Gastrocnemius medialis (tissue), 4 donors: ENCODE measurements at regions of chr10 and their contacts with region 1.

Region 1: GRCh38 chr10:58384999-58385783 is at the start of gene TFAM:
- DNase-seq: peak; percentile 86 to 93
- ATAC-seq: peak; percentile 85 to 89
- H3K4me3 ChIP-seq: peak within 1 kb of the TSS; percentile 72 to 87 (median 76)
- H3K27ac ChIP-seq: peak within 1 kb of the TSS; percentile 82 to 94 (median 87)
- H3K4me1 ChIP-seq: peaks cover 3 to 15% of the 10 kb centered on the region in 2 donors
- H3K27me3 ChIP-seq: no peaks in the 10 kb centered on the region
- CTCF ChIP-seq: peak; percentile 26 to 63 (median 49)
- POLR2A ChIP-seq: peak; percentile 90 to 95
- total RNA-seq, gene TFAM: 9.2 to 21.7 (median 15.0) TPM

Region 2: GRCh38 chr10:58177362-58177947 is 207.7 kb before region 1 on chr10:
- in situ Hi-C with region 1: loop called in 2 of 4 experiments (anchors 25 kb)
- intact Hi-C with region 1: loop called (anchors 5 kb)
- DNase-seq: no peak
- ATAC-seq: peak in 1 of 2 donors; percentile 50
- H3K4me3 ChIP-seq: no peak overlapping the region
- H3K27ac ChIP-seq: no peak overlapping the region
- H3K4me1 ChIP-seq: no peaks in the 10 kb centered on the region
- H3K27me3 ChIP-seq: no peaks in the 10 kb centered on the region
- CTCF ChIP-seq: peak; percentile 50 to 69 (median 64)
- POLR2A ChIP-seq: no peak

Region 3: GRCh38 chr10:58268870-58269605 is 116.2 kb before region 1 on chr10 and contains the start of gene CISD1:
- in situ Hi-C with region 1: no loop called
- intact Hi-C with region 1: loop called (anchors 1 kb)
- DNase-seq: peak; percentile 98 to 99
- ATAC-seq: peak; percentile 81 to 83
- H3K4me3 ChIP-seq: peak within 1 kb of the TSS; percentile 62 to 89 (median 84)
- H3K27ac ChIP-seq: peak within 1 kb of the TSS; percentile 88 to 97 (median 96)
- H3K4me1 ChIP-seq: peaks cover 24 to 36% of the 10 kb centered on the region in 2 donors
- H3K27me3 ChIP-seq: no peaks in the 10 kb centered on the region
- CTCF ChIP-seq: peak in 1 of 5 experiments; percentile 4
- POLR2A ChIP-seq: peak; percentile 90 to 91
- total RNA-seq, gene CISD1: 54.4 to 90.2 (median 71.1) TPM

Region 4: GRCh38 chr10:58299580-58299979 is 85.6 kb before region 1 on chr10:
- in situ Hi-C with region 1: no loop called
- intact Hi-C with region 1: loop called (anchors 1 kb)
- DNase-seq: peak; percentile 4 to 34
- ATAC-seq: peak; percentile 73 to 77
- H3K4me3 ChIP-seq: no peak overlapping the region
- H3K27ac ChIP-seq: no peak overlapping the region
- H3K4me1 ChIP-seq: peaks cover 3 to 8% of the 10 kb centered on the region in 2 donors
- H3K27me3 ChIP-seq: no peaks in the 10 kb centered on the region
- CTCF ChIP-seq: peak; percentile 60 to 81 (median 78)
- POLR2A ChIP-seq: no peak

Region 5: DNA sequence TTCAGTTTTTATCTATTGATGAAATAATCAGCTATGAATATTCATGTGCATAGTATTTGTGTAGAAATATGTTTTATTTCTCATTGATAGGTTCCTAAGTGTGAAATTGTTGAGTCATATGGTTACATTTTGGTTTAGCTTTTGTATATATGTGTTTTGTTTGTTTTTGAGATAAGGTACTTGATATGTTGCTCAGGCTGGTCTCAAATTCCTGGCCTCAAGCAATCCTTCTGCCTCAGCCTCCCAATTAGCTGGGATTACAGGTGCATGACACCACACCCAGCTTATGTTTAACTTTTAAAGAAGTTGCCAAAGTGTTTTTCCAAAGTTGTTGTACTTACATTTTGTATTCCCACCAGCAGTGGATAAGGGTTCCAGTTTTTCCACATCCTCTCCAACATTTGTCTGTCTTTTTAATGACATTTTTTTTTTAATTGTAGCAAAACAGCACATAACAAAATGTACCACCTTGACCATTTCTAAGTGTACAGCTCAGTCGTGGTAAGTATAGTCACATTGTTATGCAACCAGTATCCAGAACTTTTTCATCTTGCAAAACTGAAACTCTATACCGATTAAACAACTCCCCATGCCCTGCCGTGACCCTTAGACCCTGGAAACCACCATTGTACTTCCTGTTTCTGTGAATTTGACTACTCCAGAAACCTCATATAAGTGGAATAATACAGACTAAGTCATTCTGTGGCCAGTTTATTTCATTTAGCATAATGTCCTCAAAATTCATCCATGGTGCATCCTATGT is 62.9 kb before region 1 on chr10:
- in situ Hi-C with region 1: loop called in 2 of 4 experiments (anchors 10 kb)
- intact Hi-C with region 1: no loop called
- DNase-seq: peak; percentile 11 to 48
- ATAC-seq: peak; percentile 80 to 94
- H3K4me3 ChIP-seq: no peak overlapping the region
- H3K27ac ChIP-seq: peak overlapping the region in 3 of 4 donors; percentile 57 to 61 (median 58)
- H3K4me1 ChIP-seq: no peaks in the 10 kb centered on the region
- H3K27me3 ChIP-seq: peaks cover 0 to 2% (median 0%) of the 10 kb centered on the region in 3 donors
- CTCF ChIP-seq: no peak
- POLR2A ChIP-seq: no peak

Region 6: GRCh38 chr10:58334817-58335305 is 50.3 kb before region 1 on chr10 and contains the start of gene UBE2D1:
- in situ Hi-C with region 1: no loop called
- intact Hi-C with region 1: loop called (anchors 1 kb)
- DNase-seq: peak; percentile 90
- ATAC-seq: peak; percentile 63 to 78
- H3K4me3 ChIP-seq: peak within 1 kb of the TSS; percentile 78 to 98 (median 92)
- H3K27ac ChIP-seq: peak within 1 kb of the TSS; percentile 96 to 100 (median 98)
- H3K4me1 ChIP-seq: peaks cover 19 to 34% of the 10 kb centered on the region in 2 donors
- H3K27me3 ChIP-seq: no peaks in the 10 kb centered on the region
- CTCF ChIP-seq: peak in 4 of 5 experiments; percentile 14 to 53 (median 26)
- POLR2A ChIP-seq: peak; percentile 98
- total RNA-seq, gene UBE2D1: 62.0 to 178 (median 81.6) TPM